ENCODE measurements at regions of chr1 and their contacts with region 1.

Region 1: DNA sequence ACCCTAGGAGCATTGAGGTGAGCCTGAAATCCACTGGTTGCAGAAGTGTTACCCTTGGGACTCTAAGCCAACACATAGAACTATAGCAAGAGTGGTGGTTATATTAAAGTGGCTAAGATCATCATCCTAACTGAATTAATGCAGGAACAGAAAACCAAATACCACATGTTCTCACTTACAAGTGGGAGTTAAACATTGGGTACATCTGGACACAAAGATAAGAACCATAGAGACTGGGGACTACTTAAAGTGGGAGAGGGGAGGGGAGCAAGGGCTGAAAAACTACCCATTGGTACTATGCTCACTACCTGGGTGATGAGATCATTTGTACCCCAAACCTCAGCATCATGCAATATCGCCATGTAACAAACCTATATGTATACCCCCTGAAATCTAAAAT is 100.0 kb downstream of the SLC25A24 start:
- DNase-seq: peak in 2 of 4 experiments; percentile 44 to 50
- ATAC-seq: peak; percentile 85
- H3K4me3 ChIP-seq: no peak overlapping the region
- H3K27ac ChIP-seq: no peak overlapping the region
- H3K4me1 ChIP-seq: peaks cover 0 to 8% of the 10 kb centered on the region in 2 experiments; a peak in 2 of 5 replicates
- H3K27me3 ChIP-seq: no peaks in the 10 kb centered on the region
- CTCF ChIP-seq: no peak
- EP300 ChIP-seq: peak; percentile 46; the same call in 1 of the 2 replicates
- POLR2A ChIP-seq: no peak
- RAD21 ChIP-seq: no peak

Region 2: GRCh38 chr1:108041360-108042142 is 58.6 kb before region 1 on chr1:
- CTCF ChIA-PET with region 1: no interaction called
- POLR2A ChIA-PET with region 1: no interaction called
- in situ Hi-C with region 1: no loop called
- intact Hi-C with region 1: loop called (anchors 5 kb)
- DNase-seq: no peak
- ATAC-seq: no peak
- H3K4me3 ChIP-seq: no peak overlapping the region
- H3K27ac ChIP-seq: no peak overlapping the region
- H3K4me1 ChIP-seq: no peaks in the 10 kb centered on the region
- H3K27me3 ChIP-seq: peaks cover 6 to 20% of the 10 kb centered on the region in 2 experiments; a peak in 4 of 5 replicates
- CTCF ChIP-seq: no peak
- EP300 ChIP-seq: no peak
- POLR2A ChIP-seq: no peak
- RAD21 ChIP-seq: no peak